ENCODE measurements at regions of chr2 and their contacts with region 1.

Region 1: DNA sequence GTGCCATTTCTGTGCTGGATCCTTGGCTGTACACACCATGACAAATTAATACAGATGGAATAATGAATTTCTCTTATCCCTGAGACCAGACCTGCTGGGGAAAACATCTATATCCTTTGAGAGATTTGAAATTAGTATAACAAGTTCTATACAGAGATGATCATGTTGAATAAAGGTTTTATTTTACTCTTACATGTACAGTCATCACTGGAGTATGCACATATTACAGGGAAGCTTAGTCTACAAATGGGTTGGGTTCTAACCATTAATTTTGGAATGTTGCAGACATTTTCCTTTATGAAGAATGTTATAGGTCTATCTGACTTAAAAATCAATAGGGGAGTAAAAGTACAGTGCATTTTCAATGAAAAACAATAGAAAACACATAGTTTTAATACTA is 29.9 kb upstream of the MMADHC start:
- DNase-seq: peak; percentile 74
- ATAC-seq: peak; percentile 94
- H3K4me3 ChIP-seq: no peak overlapping the region
- H3K27ac ChIP-seq: 0 out of 2 replicates have a peak overlapping the region, but pooled peaks have one; percentile 9
- H3K4me1 ChIP-seq: peaks cover 20% of the 10 kb centered on the region
- H3K27me3 ChIP-seq: no peaks in the 10 kb centered on the region
- CTCF ChIP-seq: no peak

Region 2: GRCh38 chr2:149715005-149715592 is 97.6 kb after region 1 on chr2:
- CTCF ChIA-PET with region 1: no interaction called
- POLR2A ChIA-PET with region 1: no interaction called
- intact Hi-C with region 1: loop called (anchors 5 kb)
- DNase-seq: peak; percentile 74
- ATAC-seq: peak; percentile 98
- H3K4me3 ChIP-seq: no peak overlapping the region
- H3K27ac ChIP-seq: no peak overlapping the region
- H3K4me1 ChIP-seq: no peaks in the 10 kb centered on the region; the same call in 1 of the 2 replicates
- H3K27me3 ChIP-seq: no peaks in the 10 kb centered on the region
- CTCF ChIP-seq: peak; percentile 82

Measured in PC-3 (cell line).